Calu3 (cell line): ENCODE measurements at regions of chr18 and their contacts with region 1.

Region 1: DNA sequence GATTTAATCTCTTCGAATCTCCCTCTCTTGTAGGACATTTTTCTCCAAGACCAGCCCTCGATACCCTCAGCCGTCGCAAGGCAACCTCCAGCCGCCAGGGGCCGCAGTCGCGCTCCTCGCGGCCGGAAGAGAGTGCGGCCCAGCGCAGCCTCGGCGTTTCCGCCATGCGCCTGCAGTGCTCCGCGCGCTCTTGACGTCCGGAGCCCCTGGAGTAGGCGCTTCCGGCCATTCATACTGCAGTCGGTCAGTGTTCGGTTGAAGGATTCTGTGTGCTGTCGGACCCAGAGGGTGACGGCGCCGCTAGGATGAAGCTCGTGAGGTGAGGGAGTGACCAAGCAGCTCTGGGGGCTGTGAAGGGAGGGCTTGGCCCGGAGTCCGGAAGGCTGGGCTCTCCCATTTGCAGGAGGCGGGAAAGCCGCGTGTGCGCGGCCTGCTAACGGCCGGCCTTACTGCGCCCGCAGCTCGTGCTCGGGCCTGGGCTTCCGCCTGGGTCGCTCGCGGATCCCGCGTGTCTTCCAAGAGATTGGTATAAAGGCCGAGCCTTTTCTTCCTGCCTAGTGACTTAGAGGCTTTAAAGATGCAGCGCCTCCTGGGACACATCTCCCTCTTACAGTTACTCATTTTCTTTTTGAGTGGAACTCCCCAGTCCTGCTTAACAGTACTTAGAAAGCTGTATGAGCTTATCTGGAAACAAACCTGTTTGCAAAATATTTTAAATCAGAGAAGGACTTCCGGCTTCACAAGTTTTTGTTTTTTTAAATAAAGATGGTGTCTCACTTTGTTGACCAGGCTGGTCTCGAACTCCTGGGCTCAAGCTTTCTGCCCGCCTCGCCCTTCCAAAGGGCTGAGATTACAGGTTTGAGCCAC is at the start of gene SNRPD1:
- DNase-seq: peak; percentile 95
- H3K4me3 Mint-ChIP-seq: peak within 1 kb of the TSS; percentile 86
- H3K27ac Mint-ChIP-seq: peak within 1 kb of the TSS; percentile 84
- H3K4me1 Mint-ChIP-seq: peaks cover 8% of the 10 kb centered on the region
- H3K27me3 Mint-ChIP-seq: no peaks in the 10 kb centered on the region
- CTCF ChIP-seq: peak; percentile 89
- total RNA-seq, gene SNRPD1: 107 and 112 TPM in 2 replicates

Region 2: GRCh38 chr18:21600526-21601410 is 11.6 kb before region 1 on chr18 and contains the start of gene ESCO1:
- CTCF ChIA-PET with region 1: interaction called, 12 read pairs
- intact Hi-C with region 1: no loop called
- DNase-seq: peak; percentile 97
- H3K4me3 Mint-ChIP-seq: peak within 1 kb of the TSS; percentile 81
- H3K27ac Mint-ChIP-seq: peak within 1 kb of the TSS; percentile 90
- H3K4me1 Mint-ChIP-seq: peaks cover 18% of the 10 kb centered on the region
- H3K27me3 Mint-ChIP-seq: no peaks in the 10 kb centered on the region
- CTCF ChIP-seq: peak; percentile 99
- total RNA-seq, gene ESCO1: 21.8 and 24.2 TPM in 2 replicates

Region 3: GRCh38 chr18:21704603-21705364 is 92.4 kb after region 1 on chr18 and contains the start of gene ABHD3:
- CTCF ChIA-PET with region 1: no interaction called
- intact Hi-C with region 1: loop called (anchors 5 kb)
- DNase-seq: peak; percentile 93
- H3K4me3 Mint-ChIP-seq: peak within 1 kb of the TSS; percentile 88
- H3K27ac Mint-ChIP-seq: peak within 1 kb of the TSS; percentile 63
- H3K4me1 Mint-ChIP-seq: peaks cover 7% of the 10 kb centered on the region
- H3K27me3 Mint-ChIP-seq: no peaks in the 10 kb centered on the region
- CTCF ChIP-seq: peak; percentile 14
- total RNA-seq, gene ABHD3: 43.5 and 45.3 TPM in 2 replicates

Region 4: GRCh38 chr18:21740724-21741510 is 128.6 kb after region 1 on chr18 and contains the start of gene MIB1:
- CTCF ChIA-PET with region 1: no interaction called
- intact Hi-C with region 1: loop called (anchors 10 kb)
- DNase-seq: no peak
- H3K4me3 Mint-ChIP-seq: peak within 1 kb of the TSS; percentile 87
- H3K27ac Mint-ChIP-seq: peak within 1 kb of the TSS; percentile 92
- H3K4me1 Mint-ChIP-seq: no peaks in the 10 kb centered on the region
- H3K27me3 Mint-ChIP-seq: no peaks in the 10 kb centered on the region
- CTCF ChIP-seq: no peak
- total RNA-seq, gene MIB1: 33.6 and 35.2 TPM in 2 replicates